Sigmoid colon (tissue), 7 donors: ENCODE measurements at regions of chr6 and their contacts with region 1.

Region 1: DNA sequence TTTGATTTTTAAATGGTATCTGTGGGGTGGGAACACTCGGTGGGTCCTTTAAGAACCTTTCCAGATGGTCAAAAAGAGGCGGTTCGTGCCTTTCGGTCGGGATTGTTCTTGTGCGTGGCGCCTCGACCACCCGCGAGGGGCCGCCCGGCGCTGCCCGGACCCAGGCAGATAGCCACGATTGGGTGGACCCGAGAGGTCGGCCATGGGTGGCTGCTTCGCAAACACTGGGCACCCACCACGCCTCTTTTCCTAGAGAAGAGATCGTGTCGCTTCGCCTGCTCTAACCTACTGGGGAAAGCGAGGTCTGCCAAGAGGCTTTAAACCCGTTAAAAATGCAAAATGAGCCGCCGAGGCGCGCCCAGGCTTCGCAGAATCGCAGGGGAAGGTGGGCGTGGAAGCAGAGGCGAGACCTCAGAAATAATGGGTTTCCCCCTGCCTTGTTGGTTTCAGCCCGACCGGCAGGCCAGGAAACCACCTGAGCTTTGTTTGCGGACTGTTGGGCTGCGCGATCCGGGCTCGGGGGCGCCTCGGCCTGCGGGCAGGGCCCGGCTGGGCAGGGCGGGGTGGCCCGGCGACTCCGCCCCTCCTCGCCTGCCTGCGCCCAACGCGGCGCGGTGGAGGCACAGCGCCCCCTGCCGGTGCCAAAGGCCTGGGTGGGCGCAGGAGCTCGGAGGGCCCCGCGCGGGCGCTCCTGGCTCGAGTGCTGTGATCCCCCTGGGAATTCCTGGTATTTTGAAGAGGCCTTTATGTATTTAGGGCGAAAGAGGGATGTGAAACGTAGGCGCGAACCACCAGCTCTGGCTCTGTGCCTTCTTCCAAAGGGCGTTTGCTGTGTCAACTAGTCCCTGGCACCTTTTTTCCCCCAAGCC is 1.6 kb downstream of the MARCKS start:
- DNase-seq: peak; percentile 94
- H3K4me3 ChIP-seq: peak overlapping the region; percentile 50 to 79 (median 70)
- H3K27ac ChIP-seq: peak overlapping the region; percentile 89 to 99 (median 96)
- H3K4me1 ChIP-seq: peaks cover 0 to 24% (median 13%) of the 10 kb centered on the region in 4 donors
- H3K27me3 ChIP-seq: no peaks in the 10 kb centered on the region
- CTCF ChIP-seq: peak; percentile 64 to 99 (median 78)
- EP300 ChIP-seq: no peak
- POLR2A ChIP-seq: peak; percentile 62 to 72

Region 2: GRCh38 chr6:113011801-113012200 is 846.9 kb before region 1 on chr6:
- intact Hi-C with region 1: loop called (anchors 5 kb)
- DNase-seq: no peak
- H3K4me3 ChIP-seq: no peak overlapping the region
- H3K27ac ChIP-seq: peak overlapping the region in 3 of 4 donors; percentile 13 to 36 (median 23)
- H3K4me1 ChIP-seq: peaks cover 0 to 14% (median 12%) of the 10 kb centered on the region in 4 donors
- H3K27me3 ChIP-seq: no peaks in the 10 kb centered on the region
- CTCF ChIP-seq: no peak
- EP300 ChIP-seq: no peak
- POLR2A ChIP-seq: no peak

Region 3: DNA sequence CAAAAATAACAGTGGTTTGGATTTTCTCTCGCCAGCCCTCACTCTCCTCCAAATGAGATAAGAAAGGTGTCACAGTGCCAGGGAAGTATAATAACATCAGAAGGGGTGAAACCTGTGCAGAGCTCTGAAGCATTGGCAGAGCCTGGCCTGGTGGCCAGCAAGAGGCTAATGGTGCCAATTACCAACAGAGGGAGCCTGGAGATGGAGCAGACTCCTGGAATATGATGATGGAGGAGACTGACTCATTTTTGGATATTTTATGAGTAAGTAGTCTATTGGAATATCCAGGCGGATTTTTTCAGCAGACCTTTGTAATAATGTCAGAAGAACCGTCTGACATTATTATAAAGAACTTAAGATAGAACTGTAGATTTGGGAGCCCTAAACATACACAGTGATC is 444.2 kb before region 1 on chr6:
- intact Hi-C with region 1: loop called (anchors 5 kb)
- DNase-seq: no peak
- H3K4me3 ChIP-seq: no peak overlapping the region
- H3K27ac ChIP-seq: peak overlapping the region in 1 of 4 donors; percentile 28
- H3K4me1 ChIP-seq: peaks cover 0 to 8% (median 3%) of the 10 kb centered on the region in 4 donors
- H3K27me3 ChIP-seq: no peaks in the 10 kb centered on the region
- CTCF ChIP-seq: peak; percentile 18 to 59 (median 30)
- EP300 ChIP-seq: no peak
- POLR2A ChIP-seq: no peak

Region 4: DNA sequence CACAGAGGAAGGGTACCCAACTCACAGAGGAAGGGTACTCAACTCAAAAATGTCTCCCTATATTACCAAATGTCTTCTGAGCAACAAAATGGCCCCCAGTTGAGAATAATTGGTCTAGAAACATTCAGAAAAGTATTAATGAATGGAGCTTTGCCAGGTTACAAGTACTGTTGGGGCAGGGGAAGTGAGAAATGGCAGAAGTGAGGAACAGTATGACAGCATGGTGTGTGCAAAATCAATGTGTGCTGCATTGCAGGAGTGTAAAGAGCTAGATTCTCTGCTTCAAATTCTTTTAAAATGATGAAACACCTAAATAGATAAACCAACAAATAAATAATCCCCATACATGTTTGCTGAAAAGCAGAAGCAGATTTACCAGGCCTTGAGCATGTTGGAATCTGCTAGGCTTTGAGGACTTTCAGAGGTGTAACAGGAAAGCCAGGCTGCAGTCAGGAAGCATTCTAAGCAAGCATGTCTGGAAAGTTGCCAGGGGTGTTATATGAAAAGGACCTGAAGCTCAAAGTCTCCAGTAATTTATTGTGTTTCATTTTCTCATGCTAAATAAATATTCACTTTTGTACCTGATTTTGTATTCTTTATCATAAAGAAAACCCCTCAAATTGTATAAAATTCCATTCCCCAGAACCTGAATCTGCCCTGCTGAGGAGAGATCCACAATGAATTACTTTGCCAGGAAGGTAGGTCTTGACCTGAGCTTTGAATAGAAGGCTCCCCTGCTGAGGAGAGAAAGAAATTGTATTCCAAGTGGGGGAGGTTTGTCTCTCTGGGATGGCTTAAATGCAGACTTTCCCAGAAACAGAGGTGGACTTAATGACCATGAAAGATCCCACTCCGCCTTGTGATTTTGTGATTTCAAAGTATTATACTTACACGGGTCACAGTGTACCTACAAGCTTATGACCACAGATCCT is 266.6 kb before region 1 on chr6:
- intact Hi-C with region 1: loop called (anchors 10 kb)
- DNase-seq: no peak
- H3K4me3 ChIP-seq: no peak overlapping the region
- H3K27ac ChIP-seq: peak overlapping the region in 1 of 4 donors; percentile 2
- H3K4me1 ChIP-seq: peaks cover 0 to 31% (median 28%) of the 10 kb centered on the region in 4 donors
- H3K27me3 ChIP-seq: no peaks in the 10 kb centered on the region
- CTCF ChIP-seq: no peak
- EP300 ChIP-seq: no peak
- POLR2A ChIP-seq: no peak

Region 5: DNA sequence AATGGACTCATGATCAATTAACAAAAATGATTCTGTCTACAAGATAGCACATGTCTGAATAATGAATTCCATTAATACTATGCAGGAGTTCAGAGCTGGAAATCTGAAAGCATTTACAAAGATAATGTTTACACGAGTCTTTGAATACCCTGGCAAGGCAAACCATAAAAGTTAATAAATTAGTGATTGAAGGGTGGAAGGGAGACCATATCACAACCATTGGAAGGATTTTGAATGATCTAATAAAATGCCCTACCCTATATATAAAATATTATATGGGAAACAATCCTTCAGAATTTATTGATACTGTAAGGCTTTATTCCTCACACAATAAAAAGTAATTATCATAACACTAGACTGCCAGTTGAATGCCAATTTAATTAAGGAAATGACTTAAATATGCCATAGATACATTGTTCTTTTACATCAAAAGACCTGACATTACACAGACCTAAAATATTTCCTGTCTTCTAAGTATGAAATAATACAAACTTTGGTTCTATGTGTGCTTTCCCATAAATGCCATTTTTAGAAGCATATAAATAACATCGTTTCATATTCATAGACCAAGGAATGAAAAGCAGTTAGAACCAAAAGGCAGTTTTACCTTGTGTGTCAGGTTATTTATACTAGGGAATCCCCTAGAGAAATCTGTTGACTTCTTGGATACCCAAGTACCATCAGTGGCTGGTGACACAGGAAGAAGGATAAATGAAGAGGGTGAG is 250.7 kb before region 1 on chr6:
- intact Hi-C with region 1: no loop called
- DNase-seq: no peak
- H3K4me3 ChIP-seq: no peak overlapping the region
- H3K27ac ChIP-seq: no peak overlapping the region
- H3K4me1 ChIP-seq: peaks cover 0 to 24% (median 22%) of the 10 kb centered on the region in 4 donors
- H3K27me3 ChIP-seq: no peaks in the 10 kb centered on the region
- CTCF ChIP-seq: no peak
- EP300 ChIP-seq: no peak
- POLR2A ChIP-seq: no peak

Region 6: DNA sequence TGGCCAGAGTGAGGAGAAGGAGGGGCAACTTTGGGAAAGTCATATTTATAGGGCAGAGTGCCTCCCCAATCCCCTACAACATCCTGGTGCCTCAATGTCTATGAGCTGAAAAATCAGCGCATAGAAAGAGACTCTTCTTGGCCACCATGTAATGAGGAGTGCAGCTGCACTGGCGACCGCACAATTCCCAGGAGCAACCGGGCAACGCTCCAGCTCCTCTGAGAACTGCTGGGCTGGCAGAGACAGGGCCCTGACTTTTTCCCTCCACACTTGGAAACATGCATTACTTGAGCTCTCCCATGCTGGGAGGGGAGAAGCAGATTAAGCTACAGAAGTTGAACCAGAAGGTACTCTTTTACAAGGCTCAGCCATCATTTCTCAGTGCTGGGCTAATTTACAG is 32.9 kb before region 1 on chr6:
- intact Hi-C with region 1: no loop called
- DNase-seq: peak; percentile 94
- H3K4me3 ChIP-seq: no peak overlapping the region
- H3K27ac ChIP-seq: peak overlapping the region in 3 of 4 donors; percentile 72 to 79 (median 75)
- H3K4me1 ChIP-seq: peaks cover 0 to 37% (median 33%) of the 10 kb centered on the region in 4 donors
- H3K27me3 ChIP-seq: no peaks in the 10 kb centered on the region
- CTCF ChIP-seq: no peak
- EP300 ChIP-seq: no peak
- POLR2A ChIP-seq: no peak